H1 (cell line): ENCODE measurements at regions of chr3 and their contacts with region 1.

Region 1: GRCh38 chr3:39499651-39500240 is 32.3 kb downstream of the MOBP start:
- DNase-seq: no peak
- H3K4me3 ChIP-seq: no peak overlapping the region
- H3K27ac ChIP-seq: no peak overlapping the region
- H3K4me1 ChIP-seq: no peaks in the 10 kb centered on the region
- H3K27me3 ChIP-seq: peaks cover 0 to 2% (median 0%) of the 10 kb centered on the region in 4 experiments; a peak in 2 of 7 replicates
- CTCF ChIP-seq: no peak
- EP300 ChIP-seq: no peak
- POLR2A ChIP-seq: no peak
- RAD21 ChIP-seq: no peak

Region 2: GRCh38 chr3:38940394-38940793 is 559.4 kb before region 1 on chr3:
- CTCF ChIA-PET with region 1: no interaction called
- POLR2A ChIA-PET with region 1: no interaction called
- DNase-seq: no peak
- H3K4me3 ChIP-seq: no peak overlapping the region
- H3K27ac ChIP-seq: no peak overlapping the region
- H3K4me1 ChIP-seq: no peaks in the 10 kb centered on the region
- H3K27me3 ChIP-seq: no peaks in the 10 kb centered on the region
- CTCF ChIP-seq: no peak
- EP300 ChIP-seq: no peak
- POLR2A ChIP-seq: no peak
- RAD21 ChIP-seq: no peak

Region 3: GRCh38 chr3:39414421-39414907 is 85.3 kb before region 1 on chr3:
- CTCF ChIA-PET with region 1: interaction called, 12 read pairs
- POLR2A ChIA-PET with region 1: interaction called, 19 read pairs
- DNase-seq: peak in 1 of 2 experiments; percentile 61
- H3K4me3 ChIP-seq: no peak overlapping the region
- H3K27ac ChIP-seq: peak overlapping the region; percentile 32; the same call in 1 of the 2 replicates
- H3K4me1 ChIP-seq: peaks cover 0 to 3% (median 0%) of the 10 kb centered on the region in 4 experiments; a peak in 3 of 7 replicates
- H3K27me3 ChIP-seq: no peaks in the 10 kb centered on the region
- CTCF ChIP-seq: no peak
- EP300 ChIP-seq: no peak
- POLR2A ChIP-seq: peak; percentile 86 to 95
- RAD21 ChIP-seq: no peak

Region 4: GRCh38 chr3:39434574-39434973 is 65.2 kb before region 1 on chr3:
- CTCF ChIA-PET with region 1: interaction called, 24 read pairs
- POLR2A ChIA-PET with region 1: interaction called, 3 read pairs
- DNase-seq: no peak
- H3K4me3 ChIP-seq: no peak overlapping the region
- H3K27ac ChIP-seq: no peak overlapping the region; the same call in 1 of the 2 replicates
- H3K4me1 ChIP-seq: no peaks in the 10 kb centered on the region
- H3K27me3 ChIP-seq: no peaks in the 10 kb centered on the region
- CTCF ChIP-seq: no peak
- EP300 ChIP-seq: no peak
- POLR2A ChIP-seq: no peak
- RAD21 ChIP-seq: no peak

Region 5: DNA sequence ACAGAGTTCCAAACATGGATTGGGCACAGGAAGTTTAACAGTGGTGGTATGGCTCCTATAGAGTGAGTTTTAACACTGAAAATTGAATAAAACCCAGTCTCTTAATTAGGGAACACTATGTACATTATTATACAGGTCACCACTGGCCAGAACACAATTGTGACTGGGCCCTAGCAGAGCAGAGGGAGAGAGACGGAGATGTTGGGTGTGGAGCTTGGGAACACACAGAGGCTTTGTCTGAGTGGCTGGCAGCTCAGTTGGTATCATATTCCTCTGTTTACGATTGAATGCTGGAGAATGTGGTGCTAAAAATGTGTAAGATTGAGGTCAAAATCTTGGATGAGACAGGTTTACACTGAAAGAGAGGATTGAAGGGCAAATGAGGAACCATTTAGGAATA is 39.1 kb before region 1 on chr3:
- CTCF ChIA-PET with region 1: interaction called, 10 read pairs
- POLR2A ChIA-PET with region 1: no interaction called
- DNase-seq: no peak
- H3K4me3 ChIP-seq: no peak overlapping the region
- H3K27ac ChIP-seq: no peak overlapping the region
- H3K4me1 ChIP-seq: no peaks in the 10 kb centered on the region; a peak in 1 of 7 replicates
- H3K27me3 ChIP-seq: no peaks in the 10 kb centered on the region
- CTCF ChIP-seq: no peak
- EP300 ChIP-seq: no peak
- POLR2A ChIP-seq: no peak
- RAD21 ChIP-seq: no peak

Region 6: GRCh38 chr3:39473452-39474127 is 26.2 kb before region 1 on chr3:
- CTCF ChIA-PET with region 1: interaction called, 11 read pairs
- POLR2A ChIA-PET with region 1: interaction called, 3 read pairs
- DNase-seq: peak in 1 of 2 experiments; percentile 21
- H3K4me3 ChIP-seq: peak overlapping the region in 1 of 4 experiments; percentile 20; a peak in 1 of 8 replicates
- H3K27ac ChIP-seq: no peak overlapping the region; the same call in 1 of the 2 replicates
- H3K4me1 ChIP-seq: peaks cover 0 to 3% (median 0%) of the 10 kb centered on the region in 4 experiments; a peak in 1 of 7 replicates
- H3K27me3 ChIP-seq: no peaks in the 10 kb centered on the region
- CTCF ChIP-seq: no peak
- EP300 ChIP-seq: no peak
- POLR2A ChIP-seq: no peak
- RAD21 ChIP-seq: no peak

Region 7: GRCh38 chr3:39485547-39485946 is 14.2 kb before region 1 on chr3:
- CTCF ChIA-PET with region 1: interaction called, 25 read pairs
- POLR2A ChIA-PET with region 1: no interaction called
- DNase-seq: no peak
- H3K4me3 ChIP-seq: no peak overlapping the region
- H3K27ac ChIP-seq: no peak overlapping the region
- H3K4me1 ChIP-seq: no peaks in the 10 kb centered on the region
- H3K27me3 ChIP-seq: no peaks in the 10 kb centered on the region
- CTCF ChIP-seq: no peak
- EP300 ChIP-seq: no peak
- POLR2A ChIP-seq: no peak
- RAD21 ChIP-seq: no peak